Activated B cell treated with CpG ODN at 0.5 μM for 24 hours (primary cell): ENCODE measurements at regions of chr9 and their contacts with region 1.

Region 1: GRCh38 chr9:27033823-27034403 is 28.4 kb upstream of the LRRC19 start:
- DNase-seq: no peak
- ATAC-seq: peak; percentile 61
- H3K4me3 Mint-ChIP-seq: no peak overlapping the region
- H3K27ac Mint-ChIP-seq: no peak overlapping the region
- H3K4me1 Mint-ChIP-seq: no peaks in the 10 kb centered on the region
- H3K27me3 Mint-ChIP-seq: no peaks in the 10 kb centered on the region
- CTCF ChIP-seq: peak; percentile 96

Region 2: GRCh38 chr9:27276193-27277030 is 242.5 kb after region 1 on chr9:
- CTCF ChIA-PET with region 1: no interaction called
- POLR2A ChIA-PET with region 1: no interaction called
- intact Hi-C with region 1: loop called (anchors 1 kb)
- DNase-seq: no peak
- ATAC-seq: no peak
- H3K4me3 Mint-ChIP-seq: no peak overlapping the region
- H3K27ac Mint-ChIP-seq: no peak overlapping the region
- H3K4me1 Mint-ChIP-seq: peaks cover 6% of the 10 kb centered on the region
- H3K27me3 Mint-ChIP-seq: peaks cover 2% of the 10 kb centered on the region
- CTCF ChIP-seq: peak; percentile 72

Region 3: GRCh38 chr9:27888661-27889295 is 854.9 kb after region 1 on chr9:
- CTCF ChIA-PET with region 1: no interaction called
- POLR2A ChIA-PET with region 1: no interaction called
- intact Hi-C with region 1: loop called (anchors 2 kb)
- DNase-seq: no peak
- ATAC-seq: peak; percentile 66
- H3K4me3 Mint-ChIP-seq: no peak overlapping the region
- H3K27ac Mint-ChIP-seq: no peak overlapping the region
- H3K4me1 Mint-ChIP-seq: no peaks in the 10 kb centered on the region
- H3K27me3 Mint-ChIP-seq: peaks cover 2% of the 10 kb centered on the region
- CTCF ChIP-seq: no peak